OCI-LY7 (cell line): ENCODE measurements at regions of chr2 and their contacts with region 1.

Region 1: GRCh38 chr2:167388497-167388896 is 500.2 kb downstream of the XIRP2 start:
- DNase-seq: no peak
- H3K4me3 ChIP-seq: no peak overlapping the region
- H3K27ac ChIP-seq: no peak overlapping the region
- H3K4me1 ChIP-seq: no peaks in the 10 kb centered on the region
- CTCF ChIP-seq: no peak

Region 2: GRCh38 chr2:167057446-167057845 is 331.1 kb before region 1 on chr2:
- CTCF ChIA-PET with region 1: no interaction called
- POLR2A ChIA-PET with region 1: interaction called, 10 read pairs
- intact Hi-C with region 1: no loop called
- DNase-seq: no peak
- H3K4me3 ChIP-seq: no peak overlapping the region
- H3K27ac ChIP-seq: no peak overlapping the region
- H3K4me1 ChIP-seq: no peaks in the 10 kb centered on the region
- CTCF ChIP-seq: no peak